ENCODE measurements at regions of chr22 and their contacts with region 1.

Region 1: GRCh38 chr22:21952586-21953571 is at the start of gene PPM1F:
- DNase-seq: peak; percentile 95
- total RNA-seq, gene PPM1F: 20.5 TPM

Region 2: DNA sequence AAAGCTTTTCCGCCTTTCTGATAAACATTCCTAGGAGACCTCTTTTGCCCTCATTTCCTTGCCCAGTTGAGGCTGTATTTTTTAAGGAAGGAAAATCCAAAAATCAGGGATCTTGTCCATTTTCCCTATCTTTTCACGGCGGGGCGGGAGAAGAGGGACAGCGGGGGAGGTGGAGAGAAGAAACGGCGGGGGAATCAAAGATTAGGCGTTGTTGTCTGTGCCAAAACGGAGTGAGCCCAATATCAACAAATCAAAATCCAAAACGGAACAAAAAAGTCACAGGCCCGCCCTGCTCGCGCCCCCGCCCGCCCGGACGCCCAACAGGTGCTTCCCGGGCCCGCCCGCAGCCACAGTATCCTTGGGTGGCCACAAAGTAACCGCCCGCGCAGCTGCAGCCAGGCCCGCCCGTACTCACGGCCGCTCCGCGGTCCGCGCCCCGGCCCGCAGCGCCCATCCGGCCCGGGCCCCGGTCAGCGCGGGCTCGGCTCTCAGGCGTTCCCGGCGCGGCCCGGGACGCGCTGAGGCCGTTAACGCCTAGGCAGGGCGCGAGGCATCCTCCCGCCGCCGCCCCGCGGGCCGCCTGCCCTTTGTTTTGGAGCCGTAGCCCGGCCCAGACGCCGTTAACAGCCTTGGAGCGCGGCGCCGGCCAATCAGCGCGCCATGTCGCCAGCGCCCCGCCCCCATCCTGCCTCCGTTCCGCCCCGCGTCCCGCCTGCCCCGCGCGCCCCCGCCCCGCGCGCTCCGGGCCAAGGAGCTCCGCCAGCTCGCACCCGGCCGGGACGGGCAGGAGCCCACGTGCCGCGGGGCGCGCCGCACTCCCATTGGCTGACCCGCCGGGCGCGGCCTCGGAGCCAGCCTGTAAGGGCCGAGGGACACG is 217.4 kb before region 1 on chr22 and contains the start of gene YPEL1:
- intact Hi-C with region 1: loop called (anchors 2 kb)
- DNase-seq: peak; percentile 98
- total RNA-seq, gene YPEL1: 9.6 TPM

Measured in cardiac septum (tissue), 1 donor.